Mammary epithelial cell (primary cell): ENCODE measurements at regions of chr9 and their contacts with region 1.

Region 1: DNA sequence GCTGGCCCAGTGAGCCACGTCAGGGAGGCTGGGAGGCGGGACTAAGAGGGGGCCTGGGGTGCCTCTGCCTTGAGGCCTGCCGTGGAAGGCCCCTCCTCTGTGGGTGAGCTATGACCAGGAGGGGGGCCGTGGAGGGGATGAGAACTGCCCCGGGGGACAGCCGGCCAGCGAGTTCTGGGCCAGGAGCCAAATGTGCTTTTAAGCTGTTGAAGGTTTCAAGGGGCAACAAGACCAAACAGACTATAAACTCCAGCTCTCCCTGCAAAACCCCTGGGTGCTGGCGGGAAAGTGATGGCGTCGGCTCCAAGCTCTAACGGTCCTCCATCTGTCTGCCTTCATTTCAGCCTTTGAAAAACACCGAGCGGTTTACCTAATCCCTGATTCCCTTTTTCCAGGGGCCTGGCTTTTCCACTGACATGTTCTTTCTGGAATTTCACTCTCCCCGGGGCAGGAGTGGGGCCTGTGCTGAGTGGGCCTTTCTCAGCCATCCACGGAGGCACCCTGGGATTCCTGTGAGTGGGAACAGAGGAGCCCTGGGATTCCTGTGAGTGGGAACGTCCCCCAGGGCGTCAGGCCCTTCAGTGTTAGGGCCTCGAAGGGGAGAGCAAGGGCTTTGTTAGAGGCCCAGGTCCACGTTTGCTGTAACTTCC is 65.6 kb downstream of the COL5A1 start:
- DNase-seq: no peak
- H3K4me3 ChIP-seq: no peak overlapping the region
- H3K27ac ChIP-seq: no peak overlapping the region
- H3K4me1 ChIP-seq: no peaks in the 10 kb centered on the region
- H3K27me3 ChIP-seq: no peaks in the 10 kb centered on the region
- CTCF ChIP-seq: no peak

Region 2: DNA sequence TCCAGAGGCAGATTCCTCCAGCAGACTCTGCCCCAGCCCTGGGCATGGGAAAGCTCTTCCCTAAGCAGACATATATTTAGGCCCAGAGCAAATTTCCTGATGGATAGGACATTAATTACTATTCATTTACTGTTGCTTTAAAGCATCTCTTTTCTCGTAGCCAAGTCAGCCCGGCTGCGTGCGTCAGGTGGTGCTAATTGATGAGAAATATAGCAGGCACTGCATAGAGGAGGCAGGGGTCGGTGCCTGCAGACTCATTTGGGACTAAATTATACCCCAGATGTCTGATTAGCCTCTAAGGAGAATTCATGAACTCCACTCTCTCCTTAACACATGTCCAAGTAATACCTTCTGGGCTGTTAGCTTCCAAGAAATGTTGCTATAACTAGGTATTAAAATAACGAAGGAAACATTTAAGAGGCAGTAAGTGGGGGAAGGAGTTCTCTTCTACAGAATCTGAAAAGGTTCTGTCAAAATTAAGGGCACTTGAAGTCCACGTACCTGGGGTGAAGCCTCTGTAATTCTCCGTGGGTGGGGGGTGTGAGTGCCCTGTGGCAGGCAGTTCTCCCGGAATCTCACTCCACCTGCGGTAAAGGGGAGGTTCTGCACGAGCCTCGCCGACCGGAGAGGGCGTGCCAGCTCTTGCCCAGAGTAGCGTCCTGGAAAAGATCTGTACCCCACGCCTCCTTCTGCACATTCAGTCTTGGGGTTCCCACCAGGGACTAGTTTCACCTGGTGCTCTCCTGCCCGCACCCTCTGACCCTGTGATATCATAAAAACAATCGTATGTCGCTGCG is 57.5 kb after region 1 on chr9:
- CTCF ChIA-PET with region 1: no interaction called
- dilution Hi-C with region 1: loop called (anchors 5 kb)
- in situ Hi-C with region 1: no loop called
- intact Hi-C with region 1: no loop called
- DNase-seq: no peak
- H3K4me3 ChIP-seq: no peak overlapping the region
- H3K27ac ChIP-seq: no peak overlapping the region
- H3K4me1 ChIP-seq: no peaks in the 10 kb centered on the region
- H3K27me3 ChIP-seq: no peaks in the 10 kb centered on the region
- CTCF ChIP-seq: no peak